ENCODE measurements at regions of chr9 and their contacts with region 1.

Region 1: GRCh38 chr9:133133681-133134418 is 12.8 kb upstream of the RALGDS start:
- DNase-seq: peak; percentile 90 to 98 (median 95)
- H3K4me3 ChIP-seq: peak overlapping the region in 1 of 2 donors; percentile 33
- H3K4me3 Mint-ChIP-seq: peak overlapping the region; percentile 75 to 99 (median 88)
- H3K27ac ChIP-seq: peak overlapping the region; percentile 100
- H3K27ac Mint-ChIP-seq: peak overlapping the region; percentile 100
- H3K4me1 ChIP-seq: peaks cover 99% of the 10 kb centered on the region
- H3K4me1 Mint-ChIP-seq: peaks cover 42 to 93% (median 68%) of the 10 kb centered on the region in 4 donors
- H3K27me3 ChIP-seq: no peaks in the 10 kb centered on the region
- H3K27me3 Mint-ChIP-seq: no peaks in the 10 kb centered on the region

Region 2: DNA sequence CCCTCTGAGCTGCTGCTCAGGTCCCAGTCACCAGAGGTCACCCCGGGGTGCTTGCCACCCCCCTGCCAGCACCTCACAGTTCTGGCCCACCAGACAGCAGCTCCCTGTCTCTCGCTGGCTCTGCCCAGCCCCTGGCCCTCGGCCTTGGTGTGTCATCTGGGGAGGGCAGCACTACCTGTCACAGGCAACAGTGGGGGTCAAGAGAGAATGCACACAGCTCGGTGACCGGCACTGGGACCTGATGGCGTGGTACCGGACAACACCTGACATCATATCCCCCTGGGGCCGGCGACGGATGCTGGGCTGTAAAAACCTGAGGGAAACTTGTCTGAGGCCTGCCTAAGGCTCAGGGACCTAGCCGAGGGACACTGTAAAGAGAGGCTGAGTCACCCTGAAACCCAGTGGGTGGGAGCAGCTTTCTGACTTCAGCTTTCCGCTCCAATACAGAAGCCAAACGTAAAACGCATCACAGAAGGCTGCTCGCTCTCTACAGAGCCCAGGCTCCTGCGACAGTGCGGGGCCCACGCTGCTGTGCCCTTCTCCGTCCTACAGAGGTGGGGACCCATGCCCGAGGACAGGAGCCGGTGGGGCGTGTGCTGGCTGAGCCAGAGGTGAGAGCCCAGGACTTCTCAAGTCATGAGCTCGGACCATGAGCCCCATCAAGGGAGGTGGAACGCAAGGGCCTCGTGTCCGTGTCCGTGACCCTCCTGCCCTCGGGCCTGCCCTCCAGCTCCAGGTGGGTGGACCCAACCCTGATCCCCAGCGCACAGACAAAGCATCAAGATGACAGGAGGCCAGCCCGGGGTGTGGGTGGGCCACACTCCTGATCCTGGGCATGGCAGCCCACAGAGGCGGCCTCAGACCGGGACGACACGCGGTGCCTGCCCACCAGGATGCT is 18.2 kb before region 1 on chr9:
- CTCF ChIA-PET with region 1: interaction called, 6 read pairs
- POLR2A ChIA-PET with region 1: interaction called, 49 read pairs
- intact Hi-C with region 1: no loop called
- DNase-seq: peak in 3 of 5 donors; percentile 30 to 68 (median 35)
- H3K4me3 ChIP-seq: no peak overlapping the region
- H3K4me3 Mint-ChIP-seq: peak overlapping the region in 7 of 8 donors; percentile 5 to 68 (median 54)
- H3K27ac ChIP-seq: peak overlapping the region; percentile 55
- H3K27ac Mint-ChIP-seq: peak overlapping the region; percentile 79 to 90 (median 88)
- H3K4me1 ChIP-seq: peaks cover 86% of the 10 kb centered on the region
- H3K4me1 Mint-ChIP-seq: peaks cover 16 to 82% (median 48%) of the 10 kb centered on the region in 4 donors
- H3K27me3 ChIP-seq: no peaks in the 10 kb centered on the region
- H3K27me3 Mint-ChIP-seq: no peaks in the 10 kb centered on the region